Activated naive CD4-positive, alpha-beta T cell treated with anti-CD3 and anti-CD28 coated beads for 36 hours (primary cell): ENCODE measurements at regions of chr6 and their contacts with region 1.

Region 1: DNA sequence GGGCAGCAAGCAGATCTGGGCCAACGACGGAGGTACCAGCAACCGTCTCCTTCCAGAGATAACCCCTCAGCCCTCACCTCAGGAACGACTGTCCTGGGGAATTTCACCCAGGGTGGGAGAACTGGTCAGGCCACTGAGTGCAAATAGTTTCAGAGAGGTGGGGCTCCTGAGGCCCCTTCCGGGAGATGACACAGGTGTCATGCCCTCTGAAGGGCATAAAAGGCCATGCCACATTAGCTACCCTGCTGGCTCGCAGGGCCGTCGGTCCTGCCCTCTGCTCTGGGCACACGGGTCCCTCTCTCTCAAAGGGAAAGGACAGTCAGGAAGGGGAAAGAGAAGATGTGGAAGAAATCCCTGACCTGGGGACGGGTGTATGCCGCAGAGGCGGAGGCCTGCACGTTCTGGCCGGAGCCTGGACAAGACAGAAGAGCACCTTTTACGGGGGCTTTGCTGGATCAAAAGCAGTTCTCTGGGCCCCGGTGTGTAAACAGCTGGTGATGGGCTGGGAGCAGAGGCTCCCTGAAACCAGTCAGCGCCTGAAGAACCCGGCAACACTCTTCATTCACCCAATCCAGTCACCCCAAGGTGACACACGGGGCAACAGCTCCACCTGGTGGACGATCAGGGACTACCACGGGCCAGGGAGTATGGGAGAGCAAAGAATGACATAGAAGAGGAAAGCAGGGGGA is 6.4 kb upstream of the TAF8 start:
- DNase-seq: peak; percentile 98
- H3K4me3 Mint-ChIP-seq: peak overlapping the region; percentile 75
- H3K27ac Mint-ChIP-seq: peak overlapping the region; percentile 97
- H3K4me1 Mint-ChIP-seq: peaks cover 81% of the 10 kb centered on the region
- H3K27me3 Mint-ChIP-seq: no peaks in the 10 kb centered on the region

Region 2: DNA sequence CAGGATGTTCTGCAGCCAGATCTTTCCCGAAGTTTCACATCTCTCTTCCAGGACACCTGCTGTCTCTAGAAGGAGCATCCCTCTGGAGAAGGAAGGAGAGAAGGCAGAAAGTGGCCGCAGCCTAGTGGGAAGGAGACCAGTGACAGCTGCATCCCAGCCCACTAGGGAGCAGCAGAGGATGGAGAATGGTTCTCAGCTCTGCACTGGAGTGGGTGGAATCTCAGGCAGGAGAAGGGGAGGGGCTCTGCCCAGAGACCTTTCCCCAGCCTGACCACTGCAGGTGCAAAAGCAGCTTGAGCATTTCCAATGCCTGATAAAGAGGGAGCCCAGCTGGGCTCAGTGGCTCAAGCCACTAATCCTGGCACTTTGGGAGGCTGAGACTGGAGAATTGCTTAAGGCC is 676.2 kb before region 1 on chr6:
- CTCF ChIA-PET with region 1: no interaction called
- intact Hi-C with region 1: no loop called
- DNase-seq: peak; percentile 54
- H3K4me3 Mint-ChIP-seq: no peak overlapping the region
- H3K27ac Mint-ChIP-seq: no peak overlapping the region
- H3K4me1 Mint-ChIP-seq: peaks cover 16% of the 10 kb centered on the region
- H3K27me3 Mint-ChIP-seq: peaks cover 29% of the 10 kb centered on the region

Region 3: DNA sequence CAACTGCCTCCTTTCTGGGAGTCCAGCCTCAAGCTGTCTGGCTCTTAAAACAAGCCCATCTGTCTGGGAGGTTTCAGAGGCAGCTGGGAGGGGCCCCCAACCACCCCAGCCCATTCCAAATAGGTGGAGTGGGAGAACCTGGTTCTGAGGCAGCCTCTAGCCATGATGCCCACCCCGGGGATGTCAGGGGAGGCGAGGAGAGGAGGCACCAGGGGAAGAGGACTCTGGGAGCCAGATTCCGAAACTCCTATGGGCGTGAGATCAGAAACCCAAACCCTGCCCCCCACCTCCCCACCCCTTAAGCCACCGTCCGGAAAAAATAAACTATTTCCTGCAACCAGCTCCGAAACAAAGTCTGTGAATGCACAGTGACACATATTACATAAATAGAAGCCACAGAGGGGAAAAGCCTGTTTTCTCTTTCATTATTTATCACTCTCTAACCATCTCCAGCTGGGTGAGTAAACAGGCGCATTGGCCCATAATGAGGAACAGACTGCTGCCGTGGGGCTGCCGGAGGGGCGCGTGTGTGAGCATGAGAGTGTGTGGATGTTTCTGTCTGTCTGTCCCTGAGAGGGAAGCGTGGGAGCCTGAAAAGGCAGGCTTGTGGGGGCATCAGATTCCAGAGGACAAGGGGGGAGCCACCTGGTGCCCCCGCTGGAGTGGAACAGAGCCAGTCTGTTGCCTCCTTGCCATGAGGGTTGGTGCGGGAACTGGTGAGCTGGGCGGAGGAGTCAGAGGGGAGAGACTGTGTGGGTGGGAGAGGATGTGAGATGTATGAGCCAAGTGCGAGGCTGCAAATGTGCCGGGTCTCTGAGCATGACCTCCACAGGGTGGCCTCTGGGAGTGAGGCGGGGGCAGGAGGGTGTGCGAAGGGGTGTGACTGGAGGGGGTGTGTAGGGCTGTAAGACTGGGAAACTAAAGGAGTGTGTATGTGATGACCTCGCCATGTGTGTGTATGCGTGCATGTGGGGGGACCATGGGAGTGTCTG is 512.0 kb before region 1 on chr6:
- CTCF ChIA-PET with region 1: no interaction called
- intact Hi-C with region 1: loop called (anchors 10 kb)
- DNase-seq: peak; percentile 87
- H3K4me3 Mint-ChIP-seq: peak overlapping the region; percentile 73
- H3K27ac Mint-ChIP-seq: peak overlapping the region; percentile 94
- H3K4me1 Mint-ChIP-seq: peaks cover 39% of the 10 kb centered on the region
- H3K27me3 Mint-ChIP-seq: peaks cover 10% of the 10 kb centered on the region

Region 4: DNA sequence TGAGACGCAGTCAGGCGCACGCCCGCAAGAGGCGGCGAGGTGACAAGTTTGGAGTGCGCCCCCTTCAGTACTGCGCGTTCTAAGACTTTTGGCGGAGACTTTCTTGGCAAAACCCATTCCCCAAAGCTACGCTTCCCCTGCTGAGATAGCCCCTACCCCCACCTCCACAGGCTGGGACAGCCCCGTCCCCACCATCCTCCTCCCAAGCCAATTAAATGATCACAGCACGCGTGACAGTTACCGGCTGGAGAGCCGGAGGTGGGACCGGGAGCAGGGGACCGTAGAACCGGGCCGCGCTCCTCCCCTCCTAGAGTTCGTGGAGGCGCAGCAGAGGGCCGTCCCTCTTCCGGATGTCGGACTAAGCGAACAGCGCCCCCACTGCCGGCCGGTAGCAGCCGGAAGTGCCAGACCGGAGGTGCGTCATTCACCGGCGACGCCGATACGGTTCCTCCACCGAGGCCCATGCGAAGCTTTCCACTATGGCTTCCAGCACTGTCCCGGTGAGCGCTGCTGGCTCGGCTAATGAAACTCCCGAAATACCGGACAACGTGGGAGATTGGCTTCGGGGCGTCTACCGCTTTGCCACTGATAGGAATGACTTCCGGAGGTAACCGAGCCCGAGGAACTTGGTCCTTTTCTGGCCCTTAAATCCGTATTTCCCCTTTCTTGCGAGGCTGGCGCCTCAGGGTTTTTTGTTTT is 256.6 kb before region 1 on chr6 and contains the start of gene TOMM6:
- CTCF ChIA-PET with region 1: interaction called, 143 read pairs
- intact Hi-C with region 1: loop called (anchors 1 kb)
- DNase-seq: peak; percentile 97
- H3K4me3 Mint-ChIP-seq: peak within 1 kb of the TSS; percentile 92
- H3K27ac Mint-ChIP-seq: peak within 1 kb of the TSS; percentile 94
- H3K4me1 Mint-ChIP-seq: peaks cover 24% of the 10 kb centered on the region
- H3K27me3 Mint-ChIP-seq: no peaks in the 10 kb centered on the region
- total RNA-seq, gene TOMM6: 285 to 299 TPM

Region 5: DNA sequence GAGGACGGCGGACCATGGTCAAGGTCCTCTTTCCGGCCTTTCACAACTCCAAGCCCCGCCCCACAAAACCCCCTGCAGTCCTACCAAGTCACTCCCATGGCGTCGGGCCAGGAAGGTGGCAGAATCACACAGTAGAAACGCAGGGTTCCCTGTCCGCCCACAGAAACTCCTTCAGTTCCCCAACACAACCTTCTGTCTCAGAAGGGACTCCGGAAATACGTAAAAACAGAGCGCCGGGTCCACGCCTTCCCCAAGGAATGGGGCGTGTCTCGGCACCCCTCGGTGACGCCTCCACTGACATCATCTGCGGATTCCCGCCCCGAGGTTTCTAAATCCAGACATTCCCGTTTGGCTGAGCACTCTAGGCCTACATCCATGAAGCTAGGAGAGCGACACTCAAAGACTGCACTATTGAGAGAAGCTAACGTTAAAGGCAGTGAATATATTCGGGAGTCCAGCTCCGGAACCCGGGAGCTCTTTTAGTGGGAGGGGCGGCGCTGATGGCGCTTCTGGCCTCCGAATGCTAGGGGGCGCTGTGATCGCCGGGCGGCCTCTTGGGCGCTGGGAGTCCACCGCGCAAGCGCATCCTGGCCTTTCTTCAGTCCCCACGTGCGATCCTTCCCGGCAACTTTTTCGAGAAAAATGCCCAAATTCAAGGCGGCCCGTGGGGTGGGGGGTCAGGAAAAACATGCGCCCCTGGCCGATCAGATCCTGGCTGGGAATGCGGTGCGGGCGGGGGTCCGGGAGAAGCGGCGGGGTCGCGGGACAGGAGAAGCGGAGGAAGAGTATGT is 122.8 kb before region 1 on chr6 and contains the starts of genes BYSL and MED20:
- CTCF ChIA-PET with region 1: interaction called, 114 read pairs
- intact Hi-C with region 1: loop called (anchors 1 kb)
- DNase-seq: peak; percentile 97
- H3K4me3 Mint-ChIP-seq: peak within 1 kb of the TSS; percentile 91
- H3K27ac Mint-ChIP-seq: peak within 1 kb of the TSS; percentile 97
- H3K4me1 Mint-ChIP-seq: peaks cover 54% of the 10 kb centered on the region
- H3K27me3 Mint-ChIP-seq: no peaks in the 10 kb centered on the region
- total RNA-seq, gene BYSL: 49.8 TPM
- total RNA-seq, gene MED20: 24.0 to 27.4 TPM

Region 6: GRCh38 chr6:41970436-41970846 is 73.5 kb before region 1 on chr6:
- CTCF ChIA-PET with region 1: interaction called, 13 read pairs
- intact Hi-C with region 1: no loop called
- DNase-seq: peak; percentile 82
- H3K4me3 Mint-ChIP-seq: peak overlapping the region; percentile 14
- H3K27ac Mint-ChIP-seq: peak overlapping the region; percentile 98
- H3K4me1 Mint-ChIP-seq: peaks cover 93% of the 10 kb centered on the region
- H3K27me3 Mint-ChIP-seq: no peaks in the 10 kb centered on the region

Region 7: DNA sequence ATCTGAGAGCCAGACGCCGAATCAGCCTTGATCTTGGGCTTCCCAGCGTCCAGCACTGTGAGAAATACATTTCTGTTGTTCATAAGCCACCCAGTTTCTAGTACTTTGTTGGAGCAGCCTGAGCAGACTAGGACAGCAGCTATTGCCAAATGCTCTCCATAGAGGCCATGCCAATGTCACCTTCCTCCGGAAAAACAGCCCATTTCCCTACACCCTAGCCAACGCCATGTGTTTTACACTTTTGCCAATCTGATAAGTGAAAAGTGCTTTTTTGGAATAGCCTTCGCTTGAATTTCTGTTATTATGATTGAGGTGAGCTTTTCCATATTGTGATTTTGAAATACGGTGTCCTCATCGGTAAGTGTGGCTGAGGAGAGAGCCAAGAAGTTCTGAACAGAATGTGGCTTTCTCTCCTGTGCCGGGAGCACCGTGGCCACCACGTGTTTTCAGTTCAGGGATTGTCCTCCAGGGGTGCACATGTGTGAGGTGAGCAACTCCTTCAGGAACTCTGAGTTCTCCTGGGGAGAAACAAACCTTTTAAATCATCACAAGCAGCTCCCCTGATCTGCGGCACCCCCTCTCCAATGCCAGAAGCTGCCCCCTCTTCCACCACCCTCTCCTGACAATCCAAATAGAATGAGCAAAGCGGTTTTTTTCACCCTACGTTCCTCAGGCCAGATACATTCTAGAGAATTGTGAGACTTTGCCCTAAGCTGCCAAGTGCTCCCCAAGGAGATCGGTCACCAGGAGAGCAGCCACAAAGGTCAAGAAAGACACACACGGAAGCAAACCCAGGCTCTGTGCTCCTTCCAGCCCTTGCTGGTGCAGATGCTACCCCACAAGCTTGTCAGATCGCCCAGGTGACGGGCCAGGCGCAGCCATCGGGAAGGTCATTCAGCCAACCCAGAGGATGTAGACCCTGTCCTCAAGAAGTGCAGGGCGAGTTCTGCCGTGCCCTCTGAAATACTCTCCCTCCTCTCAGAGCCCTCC is 42.4 kb after region 1 on chr6:
- CTCF ChIA-PET with region 1: no interaction called
- intact Hi-C with region 1: no loop called
- DNase-seq: no peak
- H3K4me3 Mint-ChIP-seq: no peak overlapping the region
- H3K27ac Mint-ChIP-seq: no peak overlapping the region
- H3K4me1 Mint-ChIP-seq: no peaks in the 10 kb centered on the region
- H3K27me3 Mint-ChIP-seq: no peaks in the 10 kb centered on the region

Region 8: GRCh38 chr6:42104095-42104806 is 60.3 kb after region 1 on chr6:
- CTCF ChIA-PET with region 1: interaction called, 13 read pairs
- intact Hi-C with region 1: no loop called
- DNase-seq: peak; percentile 87
- H3K4me3 Mint-ChIP-seq: peak overlapping the region; percentile 65
- H3K27ac Mint-ChIP-seq: no peak overlapping the region
- H3K4me1 Mint-ChIP-seq: peaks cover 21% of the 10 kb centered on the region
- H3K27me3 Mint-ChIP-seq: no peaks in the 10 kb centered on the region